K562 (cell line): ENCODE measurements at regions of chr7 and their contacts with region 1.

Region 1: GRCh38 chr7:2670720-2671391 is 17.1 kb upstream of the AMZ1 start:
- DNase-seq: peak; percentile 78 to 84 (median 81)
- ATAC-seq: peak; percentile 99
- H3K4me3 ChIP-seq: no peak overlapping the region
- H3K27ac ChIP-seq: no peak overlapping the region
- H3K4me1 ChIP-seq: peaks cover 0 to 15% of the 10 kb centered on the region in 2 experiments; a peak in 2 of 5 replicates
- H3K27me3 ChIP-seq: peaks cover 10 to 33% of the 10 kb centered on the region in 2 experiments; a peak in 4 of 5 replicates
- CTCF ChIP-seq: peak; percentile 89 to 94 (median 92)
- EP300 ChIP-seq: no peak
- POLR2A ChIP-seq: no peak
- RAD21 ChIP-seq: peak; percentile 80 to 95

Region 2: GRCh38 chr7:2709553-2710285 is 38.9 kb after region 1 on chr7:
- CTCF ChIA-PET with region 1: interaction called, 8 read pairs
- POLR2A ChIA-PET with region 1: interaction called, 4 read pairs
- in situ Hi-C with region 1: no loop called
- intact Hi-C with region 1: loop called (anchors 1 kb)
- DNase-seq: peak; percentile 82 to 88 (median 86)
- ATAC-seq: peak; percentile 97
- H3K4me3 ChIP-seq: no peak overlapping the region
- H3K27ac ChIP-seq: no peak overlapping the region
- H3K4me1 ChIP-seq: peaks cover 0 to 42% of the 10 kb centered on the region in 2 experiments; a peak in 3 of 5 replicates
- H3K27me3 ChIP-seq: peaks cover 2 to 21% of the 10 kb centered on the region in 2 experiments; a peak in 3 of 5 replicates
- CTCF ChIP-seq: peak; percentile 94 to 96 (median 94)
- EP300 ChIP-seq: no peak
- POLR2A ChIP-seq: no peak
- RAD21 ChIP-seq: peak; percentile 69 to 88

Region 3: DNA sequence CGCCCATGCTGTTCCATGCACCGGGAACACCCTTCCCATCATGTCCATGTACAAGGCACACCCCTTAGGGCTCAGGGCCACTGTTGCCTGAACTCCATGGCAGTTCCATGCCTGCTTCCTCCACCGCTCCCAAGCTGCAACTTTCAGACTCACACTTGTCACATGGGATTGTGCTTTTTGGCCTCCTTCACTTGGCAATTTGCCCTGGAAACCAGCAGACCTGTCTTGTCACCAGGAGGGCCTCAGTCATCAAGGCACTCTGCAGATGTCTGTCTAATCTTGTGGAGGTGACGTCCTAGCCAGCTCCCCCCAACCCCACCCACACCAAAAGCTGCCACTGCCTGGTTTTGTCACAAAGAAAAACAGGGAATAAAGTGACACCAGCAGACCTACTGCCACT is 325.3 kb after region 1 on chr7:
- CTCF ChIA-PET with region 1: no interaction called
- POLR2A ChIA-PET with region 1: no interaction called
- in situ Hi-C with region 1: no loop called
- intact Hi-C with region 1: no loop called
- DNase-seq: peak in 1 of 4 experiments; percentile 15
- ATAC-seq: no peak
- H3K4me3 ChIP-seq: no peak overlapping the region
- H3K27ac ChIP-seq: no peak overlapping the region
- H3K4me1 ChIP-seq: peaks cover 2 to 3% of the 10 kb centered on the region in 2 experiments; a peak in 4 of 5 replicates
- H3K27me3 ChIP-seq: no peaks in the 10 kb centered on the region
- CTCF ChIP-seq: no peak
- EP300 ChIP-seq: no peak
- POLR2A ChIP-seq: no peak
- RAD21 ChIP-seq: no peak